ENCODE measurements at regions of chr12 and their contacts with region 1.

Region 1: GRCh38 chr12:50825372-50825838 is 17.3 kb upstream of the TMPRSS12 start:
- DNase-seq: no peak
- ATAC-seq: peak; percentile 91

Region 2: DNA sequence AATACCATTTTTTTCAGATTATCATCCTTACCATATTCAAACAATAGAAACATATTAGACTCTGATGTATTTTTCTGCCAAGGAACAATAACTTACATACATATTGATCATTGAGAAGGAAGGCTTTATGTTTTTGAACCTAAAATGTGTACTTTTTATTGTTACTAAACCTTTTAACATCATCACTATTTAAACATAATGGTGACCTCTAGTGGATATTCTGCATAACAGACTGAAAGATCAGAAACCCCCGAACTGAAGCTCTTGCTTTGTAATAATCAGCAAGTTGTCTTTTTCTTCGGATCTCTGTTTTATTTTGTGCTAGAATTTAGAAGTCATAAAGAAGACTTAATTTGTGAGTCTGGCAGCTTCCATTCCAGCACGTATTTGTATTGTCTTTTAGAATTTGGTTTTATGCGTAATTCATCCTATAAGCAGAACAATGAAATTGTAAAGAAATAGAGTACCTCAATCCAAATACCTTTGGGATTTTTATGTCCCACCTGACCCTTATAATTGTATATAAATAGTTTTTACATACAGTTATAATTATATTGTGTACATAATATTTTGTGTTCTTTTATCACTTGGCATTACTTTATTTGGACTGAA is 187.4 kb before region 1 on chr12:
- intact Hi-C with region 1: no loop called
- DNase-seq: no peak
- ATAC-seq: peak; percentile 45

Region 3: DNA sequence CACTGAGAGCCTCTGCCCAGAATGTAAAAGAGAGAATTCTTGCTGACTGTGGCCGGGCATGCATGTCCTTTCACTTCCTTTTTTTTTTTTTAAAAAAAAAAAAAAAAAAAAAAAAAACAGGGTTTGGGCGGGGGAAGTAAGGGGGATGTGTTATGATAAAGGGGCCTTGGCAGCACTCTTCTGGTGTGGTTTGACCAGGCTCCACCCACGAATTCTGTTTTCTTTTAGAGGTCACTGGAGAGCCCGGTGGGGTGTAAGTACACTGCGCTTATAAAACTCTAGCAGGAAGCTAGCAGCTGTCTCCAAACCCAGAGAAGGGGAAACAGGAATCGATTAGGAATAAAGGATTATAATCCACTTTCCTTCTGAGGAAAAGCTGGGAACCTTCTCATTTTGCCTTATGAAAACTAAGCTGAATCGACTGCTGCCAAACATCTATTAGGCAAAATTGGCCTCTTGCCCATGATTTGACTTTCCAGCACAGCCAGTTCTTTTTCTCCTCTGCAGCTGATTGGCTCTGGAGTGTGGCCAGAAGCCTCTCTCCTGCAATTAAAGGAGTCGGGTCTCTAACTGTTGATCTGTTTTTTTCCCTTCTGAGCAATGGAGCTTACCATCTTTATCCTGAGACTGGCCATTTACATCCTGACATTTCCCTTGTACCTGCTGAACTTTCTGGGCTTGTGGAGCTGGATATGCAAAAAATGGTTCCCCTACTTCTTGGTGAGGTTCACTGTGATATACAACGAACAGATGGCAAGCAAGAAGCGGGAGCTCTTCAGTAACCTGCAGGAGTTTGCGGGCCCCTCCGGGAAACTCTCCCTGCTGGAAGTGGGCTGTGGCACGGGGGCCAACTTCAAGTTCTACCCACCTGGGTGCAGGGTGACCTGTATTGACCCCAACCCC is 99.3 kb after region 1 on chr12:
- intact Hi-C with region 1: loop called (anchors 5 kb)
- DNase-seq: peak; percentile 92
- ATAC-seq: peak; percentile 91

Region 4: GRCh38 chr12:50986966-50987737 is 161.7 kb after region 1 on chr12:
- intact Hi-C with region 1: loop called (anchors 2 kb)
- DNase-seq: no peak
- ATAC-seq: peak; percentile 84

Region 5: DNA sequence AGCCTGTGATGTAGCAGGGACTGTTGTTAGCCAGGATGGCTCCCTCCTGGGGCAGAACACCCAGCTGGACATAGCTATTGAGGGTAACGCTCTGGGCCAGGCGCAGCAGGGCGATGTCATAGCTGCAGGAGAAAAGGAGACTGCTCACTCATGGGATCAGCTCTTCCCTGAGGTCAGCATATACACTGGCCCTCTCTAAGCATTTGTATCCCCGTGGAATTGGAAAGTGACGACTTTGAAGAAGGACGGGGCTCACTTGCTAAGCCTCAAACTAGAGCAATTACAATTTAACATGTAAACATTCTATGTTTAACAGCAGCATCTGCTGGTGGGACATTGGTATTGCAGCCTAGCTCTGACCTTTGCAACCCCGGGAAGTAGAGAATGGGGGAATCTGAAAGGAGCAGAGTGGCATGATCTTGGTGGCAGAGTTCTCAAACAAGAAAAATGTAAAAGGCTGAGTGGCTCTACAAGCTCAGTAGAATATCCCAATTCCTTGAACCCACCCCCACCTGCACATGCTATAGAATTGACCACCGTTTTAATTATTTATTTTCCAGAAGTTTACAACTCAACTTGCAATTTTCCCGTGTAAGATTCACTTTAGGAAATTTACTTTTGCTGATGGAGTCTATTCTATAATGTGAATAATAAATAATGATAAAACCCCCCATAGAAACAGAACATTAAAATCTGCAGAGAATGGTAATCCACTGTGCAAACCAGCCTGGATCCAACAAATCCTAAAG is 516.0 kb after region 1 on chr12:
- intact Hi-C with region 1: loop called (anchors 10 kb)
- DNase-seq: peak; percentile 56
- ATAC-seq: peak; percentile 95